ENCODE measurements at regions of chr2 and their contacts with region 1.

Region 1: DNA sequence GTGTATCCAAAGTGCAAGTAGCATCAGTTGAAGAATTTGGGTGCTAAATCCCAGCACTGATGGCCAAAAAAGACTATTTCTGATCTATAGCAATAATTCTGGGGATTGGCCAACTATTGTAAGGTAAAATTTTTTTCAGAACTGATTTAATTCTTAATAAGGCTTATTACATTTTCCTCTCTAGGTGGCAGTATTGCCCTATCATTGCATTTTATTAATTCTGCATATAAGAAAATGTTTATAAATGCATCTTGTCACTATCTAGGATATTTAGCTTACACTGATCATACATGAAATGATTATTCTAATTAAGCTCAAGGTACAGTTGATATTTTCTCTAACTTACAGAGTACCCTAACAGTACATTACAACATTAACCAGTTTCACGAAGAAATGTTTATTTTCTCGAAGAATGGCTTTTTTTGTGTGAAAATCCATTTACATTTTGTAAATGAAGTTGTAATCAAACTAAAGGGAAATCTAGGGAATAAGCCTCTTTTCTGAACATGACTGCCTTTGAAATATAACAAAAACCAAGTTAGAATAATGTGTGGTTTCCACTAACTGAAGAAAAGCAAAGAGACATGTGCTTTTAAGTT is 11.0 kb downstream of the TTN start:
- DNase-seq: no peak
- H3K4me3 Mint-ChIP-seq: no peak overlapping the region
- H3K27ac Mint-ChIP-seq: no peak overlapping the region
- H3K4me1 Mint-ChIP-seq: peaks cover 6% of the 10 kb centered on the region
- H3K27me3 Mint-ChIP-seq: peaks cover 2% of the 10 kb centered on the region

Region 2: GRCh38 chr2:178734518-178734917 is 61.7 kb before region 1 on chr2:
- intact Hi-C with region 1: no loop called
- DNase-seq: no peak
- H3K4me3 Mint-ChIP-seq: no peak overlapping the region
- H3K27ac Mint-ChIP-seq: no peak overlapping the region
- H3K4me1 Mint-ChIP-seq: no peaks in the 10 kb centered on the region
- H3K27me3 Mint-ChIP-seq: no peaks in the 10 kb centered on the region

Region 3: DNA sequence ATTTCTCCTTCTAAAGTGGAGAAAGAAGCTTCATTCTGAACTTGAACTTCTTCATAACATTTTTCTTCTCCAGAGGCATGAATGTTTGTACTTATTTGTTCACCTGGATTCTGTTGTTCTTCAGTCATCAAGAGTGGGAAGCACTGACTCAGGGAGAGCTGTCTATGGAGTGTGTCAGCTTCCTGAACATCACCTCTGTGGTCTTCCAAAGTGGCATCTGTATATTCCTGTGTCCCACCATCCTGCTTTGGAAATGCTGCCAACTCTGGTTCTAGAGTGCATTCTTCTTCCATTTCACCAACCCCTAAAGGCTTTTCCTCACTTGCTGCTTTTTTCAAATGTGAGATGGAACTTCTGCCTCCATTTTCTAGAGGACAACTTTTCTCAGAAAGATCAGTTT is 48.4 kb before region 1 on chr2:
- intact Hi-C with region 1: no loop called
- DNase-seq: no peak
- H3K4me3 Mint-ChIP-seq: no peak overlapping the region
- H3K27ac Mint-ChIP-seq: no peak overlapping the region
- H3K4me1 Mint-ChIP-seq: peaks cover 2% of the 10 kb centered on the region
- H3K27me3 Mint-ChIP-seq: peaks cover 2% of the 10 kb centered on the region

Region 4: GRCh38 chr2:178761759-178762371 is 34.3 kb before region 1 on chr2:
- intact Hi-C with region 1: no loop called
- DNase-seq: no peak
- H3K4me3 Mint-ChIP-seq: no peak overlapping the region
- H3K27ac Mint-ChIP-seq: no peak overlapping the region
- H3K4me1 Mint-ChIP-seq: peaks cover 12% of the 10 kb centered on the region
- H3K27me3 Mint-ChIP-seq: no peaks in the 10 kb centered on the region

Region 5: GRCh38 chr2:179020156-179020750 is 224.1 kb after region 1 on chr2:
- intact Hi-C with region 1: loop called (anchors 10 kb)
- DNase-seq: peak; percentile 13
- H3K4me3 Mint-ChIP-seq: no peak overlapping the region
- H3K27ac Mint-ChIP-seq: no peak overlapping the region
- H3K4me1 Mint-ChIP-seq: peaks cover 14% of the 10 kb centered on the region
- H3K27me3 Mint-ChIP-seq: no peaks in the 10 kb centered on the region

Measured in activated T-helper 2 cell treated with anti-CD3 and anti-CD28 coated beads, Interferon-gamma antibody, Interleukin-2, Interleukin-4, amounts not matched to agents 10 μg/mL and 5 μg/mL and 100 μg/mL, durations not matched to agents 14 hours and 24 hours and 36 hours (primary cell).